ENCODE measurements at regions of chr22 and their contacts with region 1.

Region 1: DNA sequence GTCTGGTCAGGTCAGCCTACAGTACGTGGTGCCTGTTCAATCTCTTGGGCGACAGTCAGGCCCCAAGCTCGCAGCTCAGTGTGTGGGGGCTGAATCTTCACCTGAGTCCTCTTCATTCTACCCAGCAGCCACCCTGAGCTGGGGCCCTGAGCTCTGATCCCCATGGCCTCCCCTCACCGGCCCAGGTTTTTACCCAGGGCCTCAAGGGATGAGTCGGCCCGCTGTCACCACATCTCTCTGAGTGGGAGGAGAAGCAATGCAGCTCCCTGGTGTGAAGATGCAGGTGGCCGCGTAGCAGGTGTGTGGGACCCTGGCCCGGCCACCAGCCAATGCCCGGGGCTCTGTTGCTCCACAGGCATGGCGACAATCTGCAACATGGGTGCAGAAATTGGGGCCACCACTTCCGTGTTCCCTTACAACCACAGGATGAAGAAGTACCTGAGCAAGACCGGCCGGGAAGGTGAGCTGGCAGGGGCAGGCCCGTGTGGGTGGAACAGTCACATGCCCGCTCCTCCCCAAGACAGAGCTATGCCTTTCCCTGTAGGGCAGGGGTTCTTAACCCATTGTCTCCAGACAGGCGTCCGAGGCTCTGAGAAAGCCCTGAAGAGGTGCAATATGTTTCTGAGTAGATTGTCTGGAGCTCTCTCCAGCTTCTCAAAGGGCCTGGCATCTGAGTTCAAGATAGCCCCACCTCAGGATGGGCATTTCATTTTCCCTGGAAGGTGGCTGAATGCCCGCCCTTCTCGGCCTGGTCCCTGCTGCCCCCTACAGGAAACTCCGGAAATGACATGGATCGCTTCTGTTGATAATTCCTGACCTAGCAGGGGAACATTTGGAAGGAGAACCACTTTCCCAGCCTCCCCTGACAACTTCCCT is 26.9 kb downstream of the POLR3H start:
- DNase-seq: peak; percentile 69 to 85
- ATAC-seq: peak; percentile 47 to 63 (median 60)
- H3K4me3 ChIP-seq: no peak overlapping the region
- H3K27ac ChIP-seq: peak overlapping the region; percentile 19
- H3K4me1 ChIP-seq: peaks cover 45% of the 10 kb centered on the region
- H3K27me3 ChIP-seq: no peaks in the 10 kb centered on the region
- CTCF ChIP-seq: peak; percentile 88

Region 2: GRCh38 chr22:41256254-41256897 is 261.0 kb before region 1 on chr22:
- intact Hi-C with region 1: no loop called
- DNase-seq: no peak
- ATAC-seq: peak in 3 of 4 donors; percentile 34 to 73 (median 34)
- H3K4me3 ChIP-seq: no peak overlapping the region
- H3K27ac ChIP-seq: no peak overlapping the region
- H3K4me1 ChIP-seq: no peaks in the 10 kb centered on the region
- H3K27me3 ChIP-seq: no peaks in the 10 kb centered on the region
- CTCF ChIP-seq: no peak

Region 3: DNA sequence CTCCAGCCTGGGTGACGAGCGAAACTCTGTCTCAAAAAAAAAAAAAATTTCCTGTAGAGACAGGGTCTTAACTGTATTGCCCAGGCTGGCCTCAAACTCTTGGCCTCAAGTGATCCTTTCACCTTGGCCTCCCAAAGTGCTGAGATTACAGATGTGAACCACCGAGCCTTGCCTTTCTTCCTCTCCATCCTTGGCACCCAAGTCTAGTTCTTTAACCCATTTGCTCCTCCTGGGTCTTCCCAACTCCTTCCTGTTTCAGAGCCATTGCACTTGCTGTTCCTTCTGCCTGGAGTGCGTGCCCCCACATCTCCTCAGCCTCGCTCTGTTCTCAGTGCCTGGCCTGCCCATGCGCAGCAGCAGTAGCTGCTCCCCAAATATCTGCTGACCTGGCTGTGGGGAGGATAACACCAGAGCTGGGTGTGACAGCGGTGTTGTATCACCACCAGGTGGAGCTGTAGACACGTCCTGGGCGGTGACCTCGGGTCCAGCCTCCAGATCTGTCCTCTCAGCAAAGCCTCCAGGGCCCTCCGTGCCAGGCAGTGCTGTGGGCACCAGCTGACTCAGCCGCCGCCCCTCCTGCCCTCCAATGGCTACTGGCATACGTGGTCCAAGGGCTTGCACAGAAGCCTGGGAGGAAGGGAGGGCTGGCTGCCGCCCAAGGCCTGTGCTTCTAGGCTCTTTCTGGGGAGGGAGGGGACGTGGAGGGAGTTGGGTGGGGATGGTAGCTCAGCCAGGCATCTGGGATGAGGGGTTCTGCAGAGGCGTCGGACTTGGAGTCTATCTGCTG is 113.7 kb before region 1 on chr22:
- intact Hi-C with region 1: loop called (anchors 2 to 5 kb)
- DNase-seq: peak; percentile 94 to 98
- ATAC-seq: peak; percentile 92 to 95 (median 94)
- H3K4me3 ChIP-seq: no peak overlapping the region
- H3K27ac ChIP-seq: peak overlapping the region; percentile 80
- H3K4me1 ChIP-seq: peaks cover 22% of the 10 kb centered on the region
- H3K27me3 ChIP-seq: no peaks in the 10 kb centered on the region
- CTCF ChIP-seq: peak; percentile 99

Region 4: DNA sequence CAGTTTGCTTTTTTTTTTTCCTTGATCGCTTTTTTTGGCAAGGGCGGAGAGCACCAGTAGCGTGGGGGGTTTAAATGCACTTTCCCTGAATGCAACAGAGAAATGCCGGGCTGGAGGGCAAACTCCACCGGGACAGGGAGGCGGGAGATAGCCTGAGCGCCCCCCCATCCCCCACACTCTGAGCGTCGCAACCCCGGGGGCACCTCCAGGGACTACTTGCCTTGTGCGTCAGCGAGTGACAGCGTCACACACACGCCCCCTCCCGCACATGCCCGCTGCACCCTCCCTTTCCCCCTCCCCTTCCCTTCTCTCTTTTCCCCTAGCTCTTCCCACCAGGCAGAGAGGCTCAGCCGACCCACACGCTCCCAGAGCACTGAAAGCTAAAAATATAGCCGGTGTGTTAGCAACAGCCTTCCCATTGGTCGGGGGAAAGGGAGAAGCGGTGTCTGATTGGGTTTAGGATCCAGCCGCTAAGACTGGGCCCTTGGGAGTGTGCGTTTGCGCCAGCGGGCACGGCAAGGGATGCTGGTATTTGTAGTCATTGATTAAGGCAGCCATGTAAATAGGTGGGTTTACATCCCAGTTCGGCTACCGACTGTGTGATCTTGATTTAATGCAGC is 69.1 kb before region 1 on chr22:
- intact Hi-C with region 1: loop called in 1 of 2 experiments (anchors 5 kb)
- DNase-seq: peak; percentile 94 to 98
- ATAC-seq: peak; percentile 65 to 78 (median 77)
- H3K4me3 ChIP-seq: peak overlapping the region; percentile 98
- H3K27ac ChIP-seq: peak overlapping the region; percentile 99
- H3K4me1 ChIP-seq: peaks cover 15% of the 10 kb centered on the region
- H3K27me3 ChIP-seq: no peaks in the 10 kb centered on the region
- CTCF ChIP-seq: no peak

Region 5: GRCh38 chr22:41468381-41469217 is 48.8 kb before region 1 on chr22 and contains the starts of genes ACO2 and PHF5A:
- intact Hi-C with region 1: loop called in 1 of 2 experiments (anchors 5 kb)
- DNase-seq: peak; percentile 98 to 99
- ATAC-seq: peak; percentile 91 to 97 (median 94)
- H3K4me3 ChIP-seq: peak within 1 kb of the TSS; percentile 98
- H3K27ac ChIP-seq: peak within 1 kb of the TSS; percentile 96
- H3K4me1 ChIP-seq: peaks cover 51% of the 10 kb centered on the region
- H3K27me3 ChIP-seq: no peaks in the 10 kb centered on the region
- CTCF ChIP-seq: no peak
- total RNA-seq, gene ACO2: 422 to 513 (median 474) TPM
- total RNA-seq, gene PHF5A: 19.9 to 40.0 (median 23.4) TPM

Region 6: GRCh38 chr22:41479671-41480396 is 37.6 kb before region 1 on chr22:
- intact Hi-C with region 1: loop called in 1 of 2 experiments (anchors 1 kb)
- DNase-seq: no peak
- ATAC-seq: peak in 2 of 4 donors; percentile 8 to 20
- H3K4me3 ChIP-seq: peak overlapping the region; percentile 11
- H3K27ac ChIP-seq: peak overlapping the region; percentile 89
- H3K4me1 ChIP-seq: peaks cover 76% of the 10 kb centered on the region
- H3K27me3 ChIP-seq: no peaks in the 10 kb centered on the region
- CTCF ChIP-seq: no peak

Measured in psoas muscle (tissue), 8 donors.